GM12878 (cell line): ENCODE measurements at regions of chr1 and their contacts with region 1.

Region 1: DNA sequence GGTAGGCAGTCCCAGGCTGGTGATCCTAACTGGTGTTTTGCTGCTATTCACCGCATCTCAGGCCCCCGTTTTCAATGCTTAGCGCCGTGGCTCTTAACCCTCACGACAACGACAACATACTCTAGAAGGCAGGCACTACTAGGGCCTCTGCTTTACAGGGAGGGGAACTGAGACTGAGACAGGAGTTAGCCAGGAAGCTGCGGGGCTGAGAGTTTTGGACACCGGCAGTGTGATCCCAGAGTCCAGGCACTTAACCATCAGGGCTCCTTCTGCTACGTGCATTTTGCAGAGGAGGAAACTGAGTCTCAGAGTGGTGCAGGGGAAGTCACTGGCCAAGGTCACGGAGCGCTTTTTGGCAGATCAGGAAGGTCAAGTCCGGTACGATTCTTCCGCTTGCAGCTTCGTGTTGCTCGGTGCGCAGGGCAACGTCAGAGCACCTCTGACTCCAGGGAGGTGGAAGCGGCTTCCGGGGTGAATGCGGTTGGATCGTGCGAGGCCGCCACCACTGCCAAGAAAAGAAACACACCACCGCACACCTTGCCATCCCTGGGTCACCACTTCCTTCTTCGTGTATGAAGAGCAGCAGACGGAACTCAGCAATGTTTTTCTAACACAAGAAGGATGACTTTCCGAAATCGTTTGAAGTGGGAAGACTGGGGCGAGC is 300.3 kb downstream of the RRAGC start:
- DNase-seq: peak; percentile 84
- ATAC-seq: peak; percentile 84
- H3K4me3 ChIP-seq: peak overlapping the region; percentile 9; the same call in 1 of the 2 replicates
- H3K27ac ChIP-seq: peak overlapping the region; percentile 87
- H3K4me1 ChIP-seq: peaks cover 45% of the 10 kb centered on the region
- H3K27me3 ChIP-seq: no peaks in the 10 kb centered on the region
- CTCF ChIP-seq: no peak
- EP300 ChIP-seq: peak; percentile 88 to 91
- POLR2A ChIP-seq: no peak; the same call in 1 of the 2 replicates
- RAD21 ChIP-seq: no peak

Region 2: DNA sequence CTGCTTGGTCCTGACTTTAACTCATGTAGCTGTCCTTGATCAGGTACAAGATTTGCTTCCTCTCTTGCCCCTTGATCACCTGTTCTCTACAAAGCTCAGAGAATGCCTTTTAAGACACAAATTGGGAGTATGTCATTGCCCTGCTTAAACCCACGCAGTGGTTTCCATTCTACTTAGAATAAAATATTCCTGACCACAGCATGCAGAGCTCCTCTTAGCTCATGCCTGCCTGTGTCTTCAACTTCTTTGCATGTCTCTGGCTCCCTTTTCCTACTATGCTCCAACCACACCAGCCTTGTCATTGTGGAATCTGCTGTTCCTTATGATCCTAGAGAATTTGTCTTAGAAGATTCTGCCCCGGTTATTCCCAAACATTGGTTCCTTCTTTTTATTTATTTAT is 92.8 kb before region 1 on chr1:
- CTCF ChIA-PET with region 1: no interaction called
- POLR2A ChIA-PET with region 1: no interaction called
- RAD21 ChIA-PET with region 1: no interaction called
- SMC1A ChIA-PET with region 1: no interaction called
- in situ Hi-C with region 1: no loop called
- intact Hi-C with region 1: no loop called
- DNase-seq: no peak
- ATAC-seq: no peak
- H3K4me3 ChIP-seq: no peak overlapping the region
- H3K27ac ChIP-seq: no peak overlapping the region
- H3K4me1 ChIP-seq: no peaks in the 10 kb centered on the region
- H3K27me3 ChIP-seq: no peaks in the 10 kb centered on the region
- CTCF ChIP-seq: no peak
- EP300 ChIP-seq: no peak
- POLR2A ChIP-seq: no peak
- RAD21 ChIP-seq: no peak

Region 3: DNA sequence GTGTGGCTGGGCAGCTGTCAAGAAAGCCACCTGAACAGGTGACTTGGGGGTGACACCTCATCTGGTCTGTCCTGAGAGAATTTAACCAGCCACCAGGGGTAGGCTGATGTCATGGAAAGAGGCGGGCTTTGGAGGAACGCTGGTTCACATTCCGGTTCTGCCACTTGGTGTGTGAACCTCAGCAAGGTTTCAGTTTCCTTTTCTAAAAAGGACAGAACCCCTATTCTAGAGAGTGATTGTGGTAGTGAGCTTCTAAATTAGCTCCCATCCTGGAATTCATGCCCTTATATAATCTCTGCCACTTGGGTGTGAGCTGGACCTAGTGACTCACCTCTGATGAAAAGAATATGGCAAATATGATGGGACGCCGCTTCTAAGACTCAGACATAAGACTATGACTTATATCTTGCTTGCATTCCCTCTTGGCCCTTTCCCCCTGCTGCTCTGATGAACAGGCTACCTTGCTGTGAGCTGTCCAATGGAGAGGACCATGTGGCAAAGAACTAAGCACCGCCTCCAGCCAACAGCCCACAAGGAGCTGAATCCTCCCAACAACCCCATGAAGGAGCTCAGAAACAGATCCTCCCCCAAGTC is 31.8 kb before region 1 on chr1:
- CTCF ChIA-PET with region 1: no interaction called
- POLR2A ChIA-PET with region 1: interaction called, 9 read pairs
- RAD21 ChIA-PET with region 1: interaction called, 5 read pairs
- SMC1A ChIA-PET with region 1: interaction called, 17 read pairs
- in situ Hi-C with region 1: no loop called
- intact Hi-C with region 1: loop called (anchors 2 kb)
- DNase-seq: peak; percentile 83
- ATAC-seq: peak; percentile 99
- H3K4me3 ChIP-seq: no peak overlapping the region
- H3K27ac ChIP-seq: peak overlapping the region; percentile 57
- H3K4me1 ChIP-seq: peaks cover 13% of the 10 kb centered on the region
- H3K27me3 ChIP-seq: no peaks in the 10 kb centered on the region
- CTCF ChIP-seq: peak in 1 of 3 experiments; percentile 21; a peak in 1 of 6 replicates
- EP300 ChIP-seq: no peak; a peak in 1 of 4 replicates
- POLR2A ChIP-seq: no peak
- RAD21 ChIP-seq: no peak